HCT116 (cell line): ENCODE measurements at regions of chr20 and their contacts with region 1.

Region 1: DNA sequence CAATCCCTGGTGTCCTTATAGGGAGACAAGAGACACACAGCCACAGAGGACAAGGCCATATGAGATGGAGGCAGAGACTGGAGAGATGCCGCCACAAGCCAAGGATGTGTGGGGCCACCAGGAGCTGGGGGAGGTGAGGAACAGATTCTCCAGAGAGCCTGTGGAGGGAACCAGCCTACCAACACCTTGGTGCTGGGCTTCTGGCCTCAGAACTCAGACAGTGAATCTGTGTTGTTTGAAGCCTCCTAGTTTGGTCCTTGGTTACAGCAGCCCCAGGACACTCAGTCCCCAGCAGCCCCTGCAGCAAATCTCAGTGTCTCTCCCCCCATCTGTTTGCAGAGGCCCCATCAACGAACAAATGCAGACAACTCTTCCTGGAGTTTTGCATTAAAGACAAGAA is 73.2 kb upstream of the BHLHE23 start:
- DNase-seq: no peak
- ATAC-seq: no peak
- H3K4me3 ChIP-seq: no peak overlapping the region
- H3K27ac ChIP-seq: no peak overlapping the region
- H3K4me1 ChIP-seq: no peaks in the 10 kb centered on the region
- H3K27me3 ChIP-seq: no peaks in the 10 kb centered on the region; the same call in 1 of the 2 replicates
- CTCF ChIP-seq: no peak
- POLR2A ChIP-seq: no peak
- RAD21 ChIP-seq: no peak

Region 2: GRCh38 chr20:63114672-63115476 is 34.9 kb after region 1 on chr20:
- CTCF ChIA-PET with region 1: no interaction called
- POLR2A ChIA-PET with region 1: no interaction called
- RAD21 ChIA-PET with region 1: no interaction called
- intact Hi-C with region 1: loop called (anchors 5 kb)
- DNase-seq: no peak
- ATAC-seq: no peak
- H3K4me3 ChIP-seq: no peak overlapping the region
- H3K27ac ChIP-seq: no peak overlapping the region
- H3K4me1 ChIP-seq: no peaks in the 10 kb centered on the region
- H3K27me3 ChIP-seq: 0 out of 2 replicates have a peak, but pooled peaks cover 3% of the 10 kb centered on the region
- CTCF ChIP-seq: no peak
- POLR2A ChIP-seq: no peak
- RAD21 ChIP-seq: no peak